PC-9 (cell line): ENCODE measurements at regions of chr18 and their contacts with region 1.

Region 1: DNA sequence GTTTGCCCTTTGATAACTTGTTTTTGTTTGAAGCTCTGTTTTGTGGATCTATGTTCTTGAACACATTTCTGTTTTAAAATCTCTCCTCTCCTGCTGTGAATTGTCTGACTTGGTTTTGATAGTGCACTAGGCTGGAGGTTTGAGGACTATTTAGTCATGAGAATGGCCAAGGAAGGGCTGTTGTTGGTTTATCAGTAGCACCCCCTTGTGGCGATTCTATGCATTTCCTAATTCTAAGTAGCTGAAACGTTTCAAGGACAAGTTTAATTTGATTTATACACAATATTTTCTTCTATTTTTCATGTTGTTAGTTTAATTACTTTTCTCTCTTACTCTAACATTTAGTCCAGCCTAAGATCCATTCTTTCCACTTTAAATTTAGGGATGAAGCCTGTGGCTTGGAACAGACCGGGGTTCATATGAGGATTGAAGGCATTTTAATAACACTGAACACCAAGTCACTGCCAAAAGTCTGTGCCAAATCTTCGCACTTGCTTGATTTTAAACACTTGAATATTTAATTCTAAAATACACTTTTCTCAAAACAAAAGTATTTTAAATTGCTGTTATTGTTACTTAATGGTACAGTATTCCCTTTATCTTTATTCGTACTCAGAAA is 166.0 kb downstream of the SOCS6 start:
- DNase-seq: peak; percentile 9 to 42
- H3K4me3 ChIP-seq: no peak overlapping the region
- H3K27ac ChIP-seq: no peak overlapping the region
- H3K4me1 ChIP-seq: no peaks in the 10 kb centered on the region
- H3K27me3 ChIP-seq: no peaks in the 10 kb centered on the region
- CTCF ChIP-seq: peak; percentile 94

Region 2: DNA sequence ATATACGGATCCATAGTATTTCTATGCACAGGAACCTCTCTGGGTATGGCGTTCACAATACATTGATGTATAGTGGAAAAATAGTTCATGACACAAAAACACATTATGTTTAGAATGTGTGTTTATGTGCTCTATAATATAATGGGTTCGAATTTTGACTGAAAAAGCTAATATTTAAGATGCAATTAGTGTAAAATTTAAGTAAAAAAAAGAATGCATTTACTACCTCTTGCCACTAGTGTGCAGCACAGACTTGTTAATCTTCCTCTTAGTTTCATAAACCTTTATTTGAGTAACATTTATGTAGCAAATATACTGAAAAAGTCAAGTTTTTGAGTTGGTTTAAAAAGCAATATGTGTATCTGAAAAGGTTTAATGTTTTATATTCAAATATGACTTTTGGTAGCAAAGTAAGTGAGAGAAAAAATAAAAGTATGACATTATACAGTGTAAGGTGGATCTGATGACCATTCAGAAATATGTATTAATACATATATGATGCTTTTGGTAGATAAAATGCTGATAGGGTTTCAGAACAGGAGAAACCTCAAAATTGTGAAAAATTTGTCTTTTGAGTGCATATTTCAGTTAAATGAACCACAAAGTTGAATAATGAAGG is 1607.5 kb before region 1 on chr18:
- CTCF ChIA-PET with region 1: no interaction called
- POLR2A ChIA-PET with region 1: no interaction called
- intact Hi-C with region 1: loop called (anchors 5 kb)
- DNase-seq: peak in 1 of 2 experiments; percentile 37
- H3K4me3 ChIP-seq: no peak overlapping the region
- H3K27ac ChIP-seq: no peak overlapping the region
- H3K4me1 ChIP-seq: no peaks in the 10 kb centered on the region
- H3K27me3 ChIP-seq: no peaks in the 10 kb centered on the region
- CTCF ChIP-seq: peak; percentile 78

Region 3: GRCh38 chr18:70172225-70172624 is 282.6 kb before region 1 on chr18:
- CTCF ChIA-PET with region 1: no interaction called
- POLR2A ChIA-PET with region 1: no interaction called
- intact Hi-C with region 1: loop called (anchors 1 kb)
- DNase-seq: no peak
- H3K4me3 ChIP-seq: no peak overlapping the region
- H3K27ac ChIP-seq: no peak overlapping the region
- H3K4me1 ChIP-seq: no peaks in the 10 kb centered on the region
- H3K27me3 ChIP-seq: no peaks in the 10 kb centered on the region
- CTCF ChIP-seq: peak; percentile 67

Region 4: GRCh38 chr18:70195852-70196434 is 258.9 kb before region 1 on chr18:
- CTCF ChIA-PET with region 1: interaction called, 4 read pairs
- POLR2A ChIA-PET with region 1: no interaction called
- intact Hi-C with region 1: loop called (anchors 2 kb)
- DNase-seq: peak; percentile 9 to 61
- H3K4me3 ChIP-seq: no peak overlapping the region
- H3K27ac ChIP-seq: peak overlapping the region; percentile 45; the same call in 1 of the 2 replicates
- H3K4me1 ChIP-seq: no peaks in the 10 kb centered on the region
- H3K27me3 ChIP-seq: no peaks in the 10 kb centered on the region
- CTCF ChIP-seq: peak; percentile 84

Region 5: DNA sequence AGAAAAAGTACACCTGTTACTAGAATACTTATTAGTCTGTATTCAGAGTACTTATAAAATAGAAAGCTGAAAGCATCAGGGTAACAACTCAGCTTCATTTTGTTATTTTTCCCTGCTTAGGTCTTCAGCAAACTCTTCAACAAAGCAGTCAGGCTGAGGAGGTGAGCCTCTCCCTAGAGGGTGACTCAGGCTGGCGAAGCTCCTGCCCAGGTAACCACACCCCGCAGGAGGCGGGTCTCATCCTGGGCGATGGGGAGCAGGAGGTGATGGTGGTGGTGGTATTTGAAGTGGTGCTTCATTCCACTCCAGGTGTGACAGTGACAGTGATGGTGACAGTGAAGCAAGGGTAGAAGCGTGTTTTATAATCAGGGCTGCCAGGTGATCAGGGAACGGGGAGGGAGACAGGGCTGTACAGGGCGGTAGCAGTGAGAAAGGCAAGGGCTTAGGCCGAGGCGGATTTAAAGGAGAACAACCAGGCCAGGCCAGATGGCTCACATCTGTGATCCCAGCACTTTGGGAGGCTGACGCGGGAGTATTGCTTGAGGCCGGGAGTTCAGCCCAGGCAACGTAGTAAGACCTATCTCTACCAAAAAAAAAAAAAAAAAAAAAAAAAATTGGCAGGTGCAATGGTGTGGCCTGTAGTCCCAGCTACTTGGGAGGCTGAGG is 38.9 kb before region 1 on chr18:
- CTCF ChIA-PET with region 1: no interaction called
- POLR2A ChIA-PET with region 1: no interaction called
- intact Hi-C with region 1: no loop called
- DNase-seq: peak; percentile 60 to 66
- H3K4me3 ChIP-seq: no peak overlapping the region
- H3K27ac ChIP-seq: peak overlapping the region; percentile 21; the same call in 1 of the 2 replicates
- H3K4me1 ChIP-seq: peaks cover 54% of the 10 kb centered on the region
- H3K27me3 ChIP-seq: no peaks in the 10 kb centered on the region
- CTCF ChIP-seq: no peak

Region 6: GRCh38 chr18:70621710-70622109 is 166.9 kb after region 1 on chr18:
- CTCF ChIA-PET with region 1: no interaction called
- POLR2A ChIA-PET with region 1: no interaction called
- intact Hi-C with region 1: no loop called
- DNase-seq: no peak
- H3K4me3 ChIP-seq: no peak overlapping the region
- H3K27ac ChIP-seq: no peak overlapping the region
- H3K4me1 ChIP-seq: no peaks in the 10 kb centered on the region
- H3K27me3 ChIP-seq: no peaks in the 10 kb centered on the region
- CTCF ChIP-seq: no peak